ENCODE measurements at regions of chr5 and their contacts with region 1.

Region 1: DNA sequence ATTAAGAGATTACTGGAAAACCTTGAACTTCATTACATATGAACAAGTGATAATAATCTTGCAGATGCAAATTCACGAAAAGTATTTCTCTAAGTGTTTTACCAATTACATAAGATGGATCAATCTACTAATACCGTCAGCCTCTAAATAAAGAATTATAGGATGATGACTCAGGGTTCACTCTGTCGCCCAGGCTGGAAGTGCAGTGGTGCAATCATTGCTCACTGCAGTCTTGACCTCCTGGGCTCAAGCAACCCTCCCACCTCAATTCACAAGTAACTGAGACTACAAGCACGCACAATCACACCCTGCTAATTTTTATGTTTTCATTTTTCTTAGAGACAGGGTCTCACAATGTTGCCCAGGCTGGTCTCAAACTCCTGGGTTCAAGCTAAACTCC is 56.1 kb downstream of the CHD1 start:
- DNase-seq: no peak
- ATAC-seq: no peak
- H3K4me3 Mint-ChIP-seq: no peak overlapping the region
- H3K27ac Mint-ChIP-seq: no peak overlapping the region
- H3K4me1 Mint-ChIP-seq: peaks cover 4% of the 10 kb centered on the region
- H3K27me3 Mint-ChIP-seq: no peaks in the 10 kb centered on the region
- CTCF ChIP-seq: no peak

Region 2: DNA sequence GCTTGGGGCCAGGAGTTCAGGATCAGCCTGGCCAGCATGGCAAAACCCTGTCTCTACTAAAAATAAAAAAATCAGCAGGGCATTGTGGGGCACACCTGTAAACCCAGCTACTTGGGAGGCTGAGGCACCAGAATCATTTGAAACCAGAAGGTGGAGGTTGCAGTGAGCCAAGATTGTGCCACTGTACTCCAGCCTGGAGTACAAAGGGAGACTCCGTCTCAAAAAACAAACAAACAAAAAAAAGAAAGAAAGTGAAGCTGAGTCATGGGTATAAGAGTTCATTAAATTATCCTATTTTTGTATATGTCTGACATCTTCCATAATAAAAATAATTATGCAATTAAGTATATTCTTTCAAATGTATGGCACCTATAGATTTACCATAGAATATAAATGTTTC is 18.9 kb after region 1 on chr5:
- CTCF ChIA-PET with region 1: no interaction called
- POLR2A ChIA-PET with region 1: no interaction called
- intact Hi-C with region 1: loop called (anchors 2 kb)
- DNase-seq: no peak
- ATAC-seq: no peak
- H3K4me3 Mint-ChIP-seq: no peak overlapping the region
- H3K27ac Mint-ChIP-seq: no peak overlapping the region
- H3K4me1 Mint-ChIP-seq: no peaks in the 10 kb centered on the region
- H3K27me3 Mint-ChIP-seq: no peaks in the 10 kb centered on the region
- CTCF ChIP-seq: no peak